Caco-2 (cell line): ENCODE measurements at regions of chr6 and their contacts with region 1.

Region 1: DNA sequence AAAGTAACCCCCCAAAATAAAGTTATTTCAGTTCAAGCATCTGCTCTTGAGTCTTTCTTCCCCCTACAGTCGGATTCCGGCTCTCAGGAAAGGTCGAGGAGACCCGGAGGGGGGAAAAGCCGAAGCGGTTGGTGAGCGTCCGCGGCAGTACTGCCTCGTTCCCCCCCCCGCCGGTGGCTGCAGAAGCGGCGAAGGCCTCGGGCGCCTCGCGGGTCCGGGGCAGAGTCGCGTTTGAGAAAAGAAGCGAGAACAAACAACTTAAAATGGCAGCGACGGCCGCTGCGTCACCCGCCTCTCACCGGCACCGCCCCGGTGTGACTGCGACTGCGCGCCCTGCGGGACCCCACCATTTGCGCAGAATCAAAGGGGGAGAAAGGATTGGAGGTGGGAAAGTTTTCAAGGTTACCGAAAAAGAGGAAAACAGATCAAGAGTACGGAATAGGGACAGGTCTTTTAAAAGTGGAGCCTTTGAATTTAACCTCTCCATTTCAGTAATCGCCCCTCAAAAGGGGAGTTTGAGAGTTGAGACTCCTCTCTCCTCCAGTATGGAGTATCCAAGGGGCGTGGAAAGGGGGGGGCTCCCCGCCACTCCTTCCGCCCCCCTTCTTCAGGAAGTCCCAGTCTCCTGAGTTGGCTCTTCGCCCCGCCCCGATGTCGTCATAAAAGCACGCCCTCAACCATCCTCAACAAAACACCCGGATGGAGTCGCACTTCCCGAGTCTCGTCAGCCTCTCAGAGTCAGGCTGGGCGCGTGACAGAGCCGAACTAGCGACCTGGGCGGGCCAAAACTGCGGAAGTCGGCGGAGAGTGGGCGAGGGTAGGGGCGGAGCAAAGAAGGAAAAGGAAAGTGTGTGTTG is 1.9 kb upstream of the C6orf62 start:
- DNase-seq: peak; percentile 99 to 100
- H3K4me3 ChIP-seq: peak overlapping the region; percentile 92
- H3K4me3 Mint-ChIP-seq: peak overlapping the region; percentile 85
- H3K27ac Mint-ChIP-seq: peak overlapping the region; percentile 96
- H3K4me1 ChIP-seq: no peaks in the 10 kb centered on the region
- H3K4me1 Mint-ChIP-seq: peaks cover 19% of the 10 kb centered on the region
- H3K27me3 ChIP-seq: no peaks in the 10 kb centered on the region
- H3K27me3 Mint-ChIP-seq: no peaks in the 10 kb centered on the region
- CTCF ChIP-seq: no peak

Region 2: GRCh38 chr6:24666641-24667377 is 54.0 kb before region 1 on chr6 and contains the starts of genes ACOT13 and TDP2:
- CTCF ChIA-PET with region 1: no interaction called
- POLR2A ChIA-PET with region 1: no interaction called
- intact Hi-C with region 1: loop called (anchors 2 kb)
- DNase-seq: peak; percentile 94 to 96
- H3K4me3 ChIP-seq: peak within 1 kb of the TSS; percentile 90
- H3K4me3 Mint-ChIP-seq: peak within 1 kb of the TSS; percentile 85
- H3K27ac Mint-ChIP-seq: peak within 1 kb of the TSS; percentile 94
- H3K4me1 ChIP-seq: peaks cover 29% of the 10 kb centered on the region
- H3K4me1 Mint-ChIP-seq: peaks cover 32% of the 10 kb centered on the region
- H3K27me3 ChIP-seq: no peaks in the 10 kb centered on the region
- H3K27me3 Mint-ChIP-seq: no peaks in the 10 kb centered on the region
- CTCF ChIP-seq: peak; percentile 52 to 62
- total RNA-seq, gene ACOT13: 55.6 and 63.1 TPM in 2 replicates
- total RNA-seq, gene TDP2: 46.7 and 47.2 TPM in 2 replicates

Region 3: GRCh38 chr6:24743265-24743943 is 22.6 kb after region 1 on chr6:
- CTCF ChIA-PET with region 1: no interaction called
- POLR2A ChIA-PET with region 1: no interaction called
- intact Hi-C with region 1: no loop called
- DNase-seq: no peak
- H3K4me3 ChIP-seq: no peak overlapping the region
- H3K4me3 Mint-ChIP-seq: no peak overlapping the region
- H3K27ac Mint-ChIP-seq: no peak overlapping the region
- H3K4me1 ChIP-seq: no peaks in the 10 kb centered on the region
- H3K4me1 Mint-ChIP-seq: no peaks in the 10 kb centered on the region
- H3K27me3 ChIP-seq: no peaks in the 10 kb centered on the region
- H3K27me3 Mint-ChIP-seq: no peaks in the 10 kb centered on the region
- CTCF ChIP-seq: no peak

Region 4: DNA sequence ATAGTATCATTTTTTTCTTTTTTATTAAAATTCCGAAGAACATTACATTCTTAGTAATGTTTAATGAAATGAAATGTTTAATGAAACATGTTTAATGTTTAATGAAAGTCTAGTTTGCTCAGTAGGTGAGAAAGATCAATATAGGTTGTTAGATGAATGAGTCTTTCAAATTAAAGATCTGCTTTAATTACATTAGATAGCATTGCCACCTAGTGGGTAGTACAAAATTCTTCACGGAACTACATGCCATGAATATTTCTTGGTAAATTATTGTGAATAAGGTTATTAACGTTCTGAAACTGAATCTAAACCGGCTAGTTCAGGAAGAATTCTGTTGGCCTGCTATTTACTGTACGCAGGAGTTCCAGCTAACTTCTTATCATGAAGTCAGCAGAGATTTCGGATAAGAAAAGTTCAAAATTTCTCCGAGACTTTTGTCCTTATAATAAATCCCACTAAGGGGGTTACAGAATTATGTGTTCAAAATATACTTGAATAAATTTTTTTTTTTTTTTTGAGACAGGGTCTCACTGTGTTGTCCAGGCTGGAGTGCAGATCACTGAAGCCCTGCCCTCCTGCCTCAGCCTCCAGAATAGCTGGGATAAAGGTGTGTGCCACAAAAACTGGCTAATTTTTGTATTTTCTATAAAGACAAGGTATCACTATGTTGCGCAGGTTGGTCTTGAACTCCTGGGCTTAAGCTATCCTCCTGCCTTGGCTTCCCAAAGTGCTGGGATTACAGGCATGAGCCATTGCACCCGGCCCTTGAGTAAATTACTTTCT is 46.0 kb after region 1 on chr6:
- CTCF ChIA-PET with region 1: no interaction called
- POLR2A ChIA-PET with region 1: no interaction called
- intact Hi-C with region 1: loop called (anchors 1 kb)
- DNase-seq: no peak
- H3K4me3 ChIP-seq: no peak overlapping the region
- H3K4me3 Mint-ChIP-seq: no peak overlapping the region
- H3K27ac Mint-ChIP-seq: no peak overlapping the region
- H3K4me1 ChIP-seq: no peaks in the 10 kb centered on the region; the same call in 1 of the 2 replicates
- H3K4me1 Mint-ChIP-seq: peaks cover 14% of the 10 kb centered on the region
- H3K27me3 ChIP-seq: no peaks in the 10 kb centered on the region
- H3K27me3 Mint-ChIP-seq: no peaks in the 10 kb centered on the region
- CTCF ChIP-seq: peak; percentile 32

Region 5: DNA sequence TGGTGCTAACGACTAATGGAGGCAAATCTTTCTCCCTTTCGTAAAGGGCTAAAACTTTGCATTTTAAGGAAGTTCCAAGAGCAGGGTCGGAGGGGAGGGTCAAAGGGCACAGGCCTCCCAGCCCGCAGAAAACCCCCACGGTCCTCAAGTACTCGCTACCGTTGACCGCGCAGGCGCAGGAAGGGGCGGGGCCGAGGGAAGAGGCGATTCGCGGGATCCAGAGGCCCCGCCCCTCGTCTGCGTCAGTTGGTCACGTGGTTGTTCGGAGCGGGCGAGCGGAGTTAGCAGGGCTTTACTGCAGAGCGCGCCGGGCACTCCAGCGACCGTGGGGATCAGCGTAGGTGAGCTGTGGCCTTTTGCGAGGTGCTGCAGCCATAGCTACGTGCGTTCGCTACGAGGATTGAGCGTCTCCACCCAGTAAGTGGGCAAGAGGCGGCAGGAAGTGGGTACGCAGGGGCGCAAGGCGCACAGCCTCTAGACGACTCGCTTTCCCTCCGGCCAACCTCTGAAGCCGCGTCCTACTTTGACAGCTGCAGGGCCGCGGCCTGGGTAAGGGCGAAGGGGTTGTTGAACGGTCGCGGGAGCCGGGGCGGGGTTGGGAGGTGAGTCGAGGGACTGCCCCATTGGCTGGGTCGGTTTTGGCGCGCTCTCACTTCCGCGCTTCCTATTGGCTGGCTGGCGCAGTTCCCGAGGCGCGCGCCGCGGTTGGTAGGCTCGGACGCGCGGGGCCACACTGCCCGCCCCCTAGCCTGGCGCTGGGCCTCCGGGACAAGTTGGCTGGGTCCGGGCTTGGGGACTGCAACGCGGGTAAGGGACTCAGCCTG is 54.1 kb after region 1 on chr6 and contains the start of gene GMNN:
- CTCF ChIA-PET with region 1: no interaction called
- POLR2A ChIA-PET with region 1: no interaction called
- intact Hi-C with region 1: loop called (anchors 1 kb)
- DNase-seq: peak; percentile 97 to 98
- H3K4me3 ChIP-seq: peak within 1 kb of the TSS; percentile 92
- H3K4me3 Mint-ChIP-seq: peak within 1 kb of the TSS; percentile 93
- H3K27ac Mint-ChIP-seq: peak within 1 kb of the TSS; percentile 95
- H3K4me1 ChIP-seq: peaks cover 33% of the 10 kb centered on the region
- H3K4me1 Mint-ChIP-seq: peaks cover 7% of the 10 kb centered on the region
- H3K27me3 ChIP-seq: no peaks in the 10 kb centered on the region
- H3K27me3 Mint-ChIP-seq: no peaks in the 10 kb centered on the region
- CTCF ChIP-seq: no peak
- total RNA-seq, gene GMNN: 66.5 and 70.0 TPM in 2 replicates

Region 6: GRCh38 chr6:25006565-25007001 is 285.8 kb after region 1 on chr6:
- CTCF ChIA-PET with region 1: no interaction called
- POLR2A ChIA-PET with region 1: no interaction called
- intact Hi-C with region 1: no loop called
- DNase-seq: no peak
- H3K4me3 ChIP-seq: no peak overlapping the region
- H3K4me3 Mint-ChIP-seq: no peak overlapping the region
- H3K27ac Mint-ChIP-seq: no peak overlapping the region
- H3K4me1 ChIP-seq: no peaks in the 10 kb centered on the region
- H3K4me1 Mint-ChIP-seq: no peaks in the 10 kb centered on the region
- H3K27me3 ChIP-seq: no peaks in the 10 kb centered on the region
- H3K27me3 Mint-ChIP-seq: no peaks in the 10 kb centered on the region
- CTCF ChIP-seq: no peak

Region 7: DNA sequence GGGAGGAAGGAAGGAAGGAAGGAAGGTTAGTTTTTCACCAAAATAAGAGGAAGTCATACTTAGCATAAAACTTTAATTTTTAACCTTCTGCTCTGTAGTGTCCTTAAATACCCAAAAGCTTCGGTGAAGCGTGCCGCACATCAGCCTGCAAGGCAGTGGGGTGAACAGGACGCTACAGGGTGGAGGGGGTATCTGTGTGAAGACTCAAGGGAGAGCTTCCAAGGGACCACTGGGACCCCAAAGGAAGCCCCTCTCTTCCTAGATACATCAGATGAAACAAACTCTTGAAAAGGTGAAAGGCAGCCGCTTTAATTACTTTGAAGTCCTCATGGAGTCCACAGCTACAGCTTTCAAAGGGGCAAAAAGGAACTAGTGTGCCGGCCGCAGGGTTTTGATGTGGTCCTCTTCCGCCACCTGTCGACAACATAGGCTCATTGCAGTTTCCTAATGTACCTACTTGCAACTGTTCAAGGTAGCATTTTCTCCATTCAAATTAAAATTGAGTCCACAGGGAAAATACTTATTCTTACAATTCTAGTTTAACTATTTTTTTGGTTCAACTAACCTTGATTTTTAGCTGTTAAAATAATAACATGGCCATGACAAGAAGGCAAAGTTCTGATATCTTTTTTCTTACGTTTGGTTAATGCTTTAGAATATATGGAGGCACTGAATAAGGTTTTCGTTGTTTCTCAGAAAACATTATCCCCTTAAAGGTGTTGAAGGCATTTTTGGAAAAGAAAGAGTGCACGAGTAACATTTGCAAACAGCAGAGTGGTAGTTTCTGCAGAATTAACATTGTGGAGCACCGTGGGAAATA is 349.9 kb after region 1 on chr6:
- CTCF ChIA-PET with region 1: no interaction called
- POLR2A ChIA-PET with region 1: no interaction called
- intact Hi-C with region 1: loop called (anchors 10 kb)
- DNase-seq: peak; percentile 69 to 71
- H3K4me3 ChIP-seq: no peak overlapping the region
- H3K4me3 Mint-ChIP-seq: no peak overlapping the region
- H3K27ac Mint-ChIP-seq: no peak overlapping the region
- H3K4me1 ChIP-seq: no peaks in the 10 kb centered on the region
- H3K4me1 Mint-ChIP-seq: no peaks in the 10 kb centered on the region
- H3K27me3 ChIP-seq: no peaks in the 10 kb centered on the region
- H3K27me3 Mint-ChIP-seq: no peaks in the 10 kb centered on the region
- CTCF ChIP-seq: peak; percentile 78 to 83